HepG2 (cell line): ENCODE measurements at regions of chr14 and their contacts with region 1.

Region 1: GRCh38 chr14:104826189-104826860 is 25.4 kb downstream of the ZBTB42 start:
- DNase-seq: peak; percentile 65
- ATAC-seq: peak; percentile 75
- H3K4me3 ChIP-seq: peak overlapping the region; percentile 66 to 82 (median 77)
- H3K27ac ChIP-seq: peak overlapping the region; percentile 56
- H3K4me1 ChIP-seq: peaks cover 29% of the 10 kb centered on the region
- H3K27me3 ChIP-seq: no peaks in the 10 kb centered on the region; a peak in 1 of 5 replicates
- CTCF ChIP-seq: peak; percentile 83
- EP300 ChIP-seq: no peak
- POLR2A ChIP-seq: peak in 1 of 2 experiments; percentile 72; a peak in 2 of 4 replicates
- RAD21 ChIP-seq: peak; percentile 40; the same call in 1 of the 2 replicates

Region 2: GRCh38 chr14:104865644-104866441 is 39.5 kb after region 1 on chr14:
- CTCF ChIA-PET with region 1: interaction called, 4 read pairs
- POLR2A ChIA-PET with region 1: interaction called, 15 read pairs
- in situ Hi-C with region 1: loop called (anchors 5 kb)
- intact Hi-C with region 1: loop called (anchors 2 kb)
- DNase-seq: no peak
- ATAC-seq: peak; percentile 28
- H3K4me3 ChIP-seq: peak overlapping the region; percentile 78 to 91 (median 84)
- H3K27ac ChIP-seq: peak overlapping the region; percentile 44
- H3K4me1 ChIP-seq: peaks cover 25% of the 10 kb centered on the region
- H3K27me3 ChIP-seq: no peaks in the 10 kb centered on the region; a peak in 1 of 5 replicates
- CTCF ChIP-seq: 0 out of 2 replicates have a peak, but pooled peaks have one; percentile 9
- EP300 ChIP-seq: no peak
- POLR2A ChIP-seq: no peak
- RAD21 ChIP-seq: no peak